Spleen (tissue), 13 donors: ENCODE measurements at regions of chr1 and their contacts with region 1.

Region 1: DNA sequence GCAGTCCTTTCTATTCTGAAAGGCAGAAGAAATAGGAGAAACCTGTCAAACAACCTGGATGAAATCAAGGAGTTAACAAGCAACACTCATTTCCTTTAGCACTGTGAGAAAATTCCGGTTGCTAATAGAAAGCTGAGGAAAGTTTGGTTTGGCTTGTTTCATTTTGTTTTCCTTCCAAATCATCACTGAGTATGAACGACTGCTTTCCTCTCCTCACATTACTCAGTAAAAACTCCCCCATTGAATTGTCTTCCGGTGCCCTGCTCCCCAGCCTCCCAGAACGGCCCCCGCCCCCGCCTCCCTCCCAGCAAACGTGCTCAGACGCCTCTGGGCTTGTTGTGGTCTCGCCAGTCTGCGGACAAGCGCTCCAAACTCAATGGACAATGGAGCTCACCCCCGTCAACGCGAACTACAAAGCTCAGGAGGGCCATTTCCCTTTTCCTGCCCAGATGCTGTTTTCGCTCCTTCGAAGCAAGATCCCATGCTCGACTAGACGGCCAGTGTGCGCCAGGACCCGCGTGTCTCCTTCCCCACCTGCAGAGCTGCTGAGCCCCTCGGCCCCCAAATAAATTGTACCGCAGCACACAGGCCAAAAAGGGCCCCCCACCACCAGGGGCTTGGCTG is 747 bp downstream of the STX6 start:
- DNase-seq: peak; percentile 88
- H3K4me3 ChIP-seq: peak overlapping the region; percentile 75 to 100 (median 96)
- H3K27ac ChIP-seq: peak overlapping the region; percentile 79 to 97 (median 90)
- H3K4me1 ChIP-seq: peaks cover 15 to 52% (median 43%) of the 10 kb centered on the region in 6 donors
- H3K27me3 ChIP-seq: peaks cover 0 to 4% (median 0%) of the 10 kb centered on the region in 7 donors
- CTCF ChIP-seq: no peak
- POLR2A ChIP-seq: no peak

Region 2: DNA sequence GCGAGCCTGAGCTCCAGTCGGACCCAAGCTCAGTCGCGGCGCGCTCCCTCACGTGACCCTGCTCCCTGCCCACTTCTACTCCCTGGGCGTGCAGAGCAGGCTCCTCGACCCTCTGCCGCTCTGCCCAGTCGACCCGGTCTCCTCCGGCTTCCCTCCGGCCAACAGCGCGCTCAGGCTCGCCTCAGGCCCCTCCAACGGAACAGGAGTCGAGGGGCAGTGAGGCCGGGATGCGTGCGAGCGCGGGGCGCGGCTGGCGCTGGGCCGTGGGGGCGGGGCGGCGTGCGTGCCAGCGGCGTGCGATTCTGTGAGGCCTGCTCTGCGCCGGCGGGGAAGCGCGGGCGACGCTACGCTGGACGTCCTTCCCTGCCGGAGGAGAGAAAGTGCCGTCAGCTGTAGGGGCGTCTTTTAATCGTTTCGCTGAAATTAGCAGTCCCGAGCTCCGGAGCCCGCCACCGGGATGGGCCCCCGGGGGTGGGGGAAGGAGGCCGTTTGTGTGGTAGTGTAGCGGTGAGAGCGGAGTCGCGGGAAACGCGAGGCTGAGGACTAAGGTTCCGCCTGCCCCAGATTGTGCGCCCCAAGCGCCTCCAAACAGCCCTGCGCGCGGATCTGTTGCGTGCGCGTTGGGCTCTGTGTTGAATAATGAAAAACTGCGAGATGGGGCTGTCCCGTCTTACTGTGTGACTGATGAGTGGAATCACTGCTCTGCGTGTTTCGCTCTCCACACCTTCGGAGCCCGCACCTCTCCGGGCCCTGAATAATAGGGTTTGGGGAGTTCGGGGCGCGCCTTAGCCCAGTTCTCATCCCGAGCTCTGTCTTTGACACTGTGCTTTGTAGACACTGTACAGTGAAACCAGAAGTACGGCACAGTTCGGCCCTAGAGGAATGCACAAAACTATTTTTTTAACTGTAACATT is 519.3 kb before region 1 on chr1 and contains the start of gene ACBD6:
- intact Hi-C with region 1: loop called (anchors 10 kb)
- DNase-seq: peak; percentile 96
- H3K4me3 ChIP-seq: peak within 1 kb of the TSS; percentile 72 to 93 (median 85)
- H3K27ac ChIP-seq: peak within 1 kb of the TSS; percentile 86 to 95 (median 92)
- H3K4me1 ChIP-seq: peaks cover 10 to 59% (median 34%) of the 10 kb centered on the region in 6 donors
- H3K27me3 ChIP-seq: no peaks in the 10 kb centered on the region
- CTCF ChIP-seq: peak in 6 of 11 experiments; percentile 11 to 34 (median 19)
- POLR2A ChIP-seq: peak in 1 of 3 donors; percentile 10
- total RNA-seq, gene ACBD6: 30.2 to 62.9 (median 45.1) TPM

Region 3: DNA sequence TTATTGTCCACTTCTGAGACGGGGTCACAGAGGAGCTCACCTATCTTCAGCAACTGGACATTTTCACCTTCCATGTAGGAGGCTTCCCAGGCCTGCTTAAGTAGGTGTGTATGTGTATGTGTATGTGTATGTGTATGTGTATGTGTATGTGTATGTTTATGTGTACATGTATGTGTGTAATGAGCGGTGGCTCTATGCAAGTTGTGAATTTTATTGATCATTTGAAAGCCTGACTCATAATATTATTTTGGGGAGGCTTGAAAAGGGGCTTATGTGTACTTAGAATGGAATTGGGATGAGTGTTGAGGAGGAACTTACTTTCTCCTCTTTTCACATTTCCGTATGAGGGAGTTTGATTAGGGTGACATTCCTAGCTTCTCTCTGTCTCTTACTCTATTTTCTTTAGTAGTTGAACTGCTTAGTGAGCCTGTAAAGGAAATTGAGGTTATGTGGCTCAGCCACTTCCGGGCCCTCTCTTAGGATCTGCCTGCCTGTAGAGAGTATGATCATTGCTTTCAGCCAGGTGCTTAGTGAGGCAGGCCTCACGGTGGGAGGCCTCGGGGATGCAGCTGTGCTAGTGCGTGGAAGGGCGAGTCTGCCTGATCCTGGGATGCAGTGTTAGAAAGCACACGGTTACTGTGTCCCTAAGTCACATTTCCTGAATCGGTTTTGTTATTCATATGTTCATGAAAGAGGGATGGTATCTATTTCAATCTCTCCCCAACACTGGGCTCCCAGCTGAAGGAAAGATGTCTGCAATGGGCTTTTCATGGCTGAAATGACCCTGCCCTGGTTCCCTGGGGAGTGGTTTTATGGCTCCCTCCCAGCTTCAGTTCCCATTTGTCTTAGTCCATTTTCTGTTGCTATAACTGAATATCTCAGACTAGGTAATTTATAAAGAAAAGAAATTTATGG is 127.7 kb after region 1 on chr1:
- intact Hi-C with region 1: loop called (anchors 5 kb)
- DNase-seq: peak; percentile 89
- H3K4me3 ChIP-seq: no peak overlapping the region
- H3K27ac ChIP-seq: peak overlapping the region in 6 of 8 donors; percentile 28 to 78 (median 50)
- H3K4me1 ChIP-seq: peaks cover 14 to 60% (median 48%) of the 10 kb centered on the region in 6 donors
- H3K27me3 ChIP-seq: no peaks in the 10 kb centered on the region
- CTCF ChIP-seq: no peak
- POLR2A ChIP-seq: no peak

Region 4: DNA sequence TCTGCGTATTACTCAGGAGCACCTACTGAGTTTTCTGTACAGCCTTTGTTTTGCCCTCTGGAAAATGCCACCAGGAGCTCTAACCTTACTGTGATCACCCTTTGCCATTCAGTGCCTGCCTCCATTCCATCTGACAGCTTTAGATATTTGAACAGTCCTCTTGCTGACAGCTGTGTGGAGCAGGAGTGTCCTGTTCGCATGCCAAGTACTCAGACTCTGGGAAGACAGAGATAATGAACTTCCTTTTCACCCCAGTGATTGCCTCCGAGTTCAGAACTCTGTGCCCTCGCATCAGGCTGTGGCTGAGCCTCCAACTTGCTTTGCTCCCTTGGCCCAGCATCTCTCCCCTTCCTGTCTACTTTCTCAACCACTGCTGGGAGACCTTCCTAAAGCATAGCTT is 535.4 kb after region 1 on chr1:
- intact Hi-C with region 1: no loop called
- DNase-seq: no peak
- H3K4me3 ChIP-seq: no peak overlapping the region
- H3K27ac ChIP-seq: no peak overlapping the region
- H3K4me1 ChIP-seq: no peaks in the 10 kb centered on the region
- H3K27me3 ChIP-seq: peaks cover 0 to 17% (median 0%) of the 10 kb centered on the region in 7 donors
- CTCF ChIP-seq: no peak
- POLR2A ChIP-seq: no peak